MCF 10A (cell line): ENCODE measurements at regions of chr3 and their contacts with region 1.

Region 1: DNA sequence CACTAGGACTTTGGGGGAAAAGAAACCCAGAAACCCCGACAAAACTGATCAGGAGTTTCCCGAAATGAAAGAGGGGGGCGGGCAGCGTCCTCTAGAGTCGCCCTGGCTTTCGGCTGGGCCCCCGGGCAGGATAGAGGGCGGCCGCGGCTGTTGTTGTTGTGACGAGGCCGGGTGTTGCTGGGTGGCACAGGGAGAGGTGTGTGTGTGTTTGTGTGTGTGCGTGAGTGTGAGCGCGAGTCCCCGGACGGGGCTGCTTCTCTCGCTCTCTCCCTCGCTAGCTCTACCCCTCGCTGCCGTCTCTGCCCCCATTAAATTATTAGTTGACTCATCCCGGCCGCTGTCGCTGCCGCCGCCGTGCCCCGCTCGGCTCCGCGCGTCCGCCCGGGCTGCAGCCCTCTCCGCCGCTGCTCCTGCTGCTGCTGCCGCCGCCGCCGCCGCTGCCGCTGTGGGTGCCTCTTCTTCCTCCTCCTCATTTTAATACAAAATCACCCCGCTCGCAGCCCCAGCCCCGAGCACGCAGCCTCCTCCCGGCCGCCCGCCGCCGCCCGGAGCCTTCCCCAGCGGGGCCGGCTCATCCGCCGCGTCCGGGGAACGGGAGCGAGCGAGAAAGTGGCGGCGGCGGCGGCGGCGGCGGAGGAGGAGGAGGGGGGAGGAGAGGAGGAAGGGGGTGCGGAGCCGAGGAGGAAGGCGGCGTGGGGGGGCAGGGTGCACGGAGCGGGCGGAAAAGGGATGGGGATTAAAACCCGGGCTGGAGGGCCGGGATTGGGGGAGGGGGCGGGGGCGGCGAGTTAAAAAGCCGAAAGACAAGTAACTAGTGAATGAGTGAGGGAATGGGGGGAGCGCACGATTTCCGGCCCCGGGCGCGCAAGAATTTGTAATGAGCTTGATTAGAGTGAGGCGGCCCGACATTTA is at the start of gene SATB1:
- DNase-seq: peak; percentile 39
- H3K4me3 Mint-ChIP-seq: peak within 1 kb of the TSS; percentile 78
- H3K27ac Mint-ChIP-seq: no peak within 1 kb of the TSS
- H3K4me1 Mint-ChIP-seq: peaks cover 9% of the 10 kb centered on the region
- H3K27me3 Mint-ChIP-seq: peaks cover 99% of the 10 kb centered on the region
- CTCF ChIP-seq: no peak
- total RNA-seq, gene SATB1: 0.23 and 0.44 TPM in 2 replicates

Region 2: DNA sequence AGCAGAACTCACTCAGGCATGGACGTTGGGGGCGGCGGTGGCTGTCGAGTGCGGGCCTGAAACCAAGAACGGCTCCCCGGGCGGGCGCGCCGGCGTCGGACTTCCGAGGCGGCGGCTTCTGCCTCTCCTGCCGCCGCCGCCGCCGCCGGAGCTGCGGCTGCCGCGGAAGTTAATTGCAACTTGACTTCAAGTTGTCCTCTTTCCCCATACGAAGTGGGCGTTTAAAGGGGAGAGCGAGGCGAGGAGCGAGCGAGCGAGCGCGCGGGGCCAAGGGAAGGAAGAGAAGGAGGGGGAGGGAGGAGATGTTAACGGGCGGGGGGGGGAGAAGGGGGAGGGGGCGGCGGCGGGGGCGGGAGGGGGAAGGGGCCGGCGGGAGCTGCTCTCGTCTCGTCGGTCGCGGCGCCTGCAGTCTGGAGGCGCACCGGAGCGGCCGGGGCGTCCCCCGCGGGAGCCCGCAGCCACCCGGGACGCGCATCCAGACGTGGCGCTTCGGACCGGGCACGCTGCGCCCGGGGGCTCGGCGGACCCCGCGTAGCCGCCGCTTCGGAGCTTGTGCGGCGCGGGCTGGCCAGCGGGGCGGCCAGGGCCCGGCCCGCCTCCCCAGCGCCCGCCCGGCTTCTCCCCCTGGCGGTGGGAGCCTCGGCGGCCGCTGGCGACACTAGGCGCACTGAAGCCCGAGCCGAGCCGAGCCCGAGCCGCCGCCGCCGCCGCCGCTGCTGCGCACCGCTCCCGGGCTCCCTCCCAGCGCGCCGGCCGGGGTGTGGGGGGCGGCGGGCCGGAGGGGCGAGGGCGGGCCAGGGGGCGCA is 19.8 kb after region 1 on chr3:
- CTCF ChIA-PET with region 1: interaction called, 3 read pairs
- POLR2A ChIA-PET with region 1: no interaction called
- intact Hi-C with region 1: loop called (anchors 2 kb)
- DNase-seq: peak; percentile 36
- H3K4me3 Mint-ChIP-seq: peak overlapping the region; percentile 71
- H3K27ac Mint-ChIP-seq: no peak overlapping the region
- H3K4me1 Mint-ChIP-seq: no peaks in the 10 kb centered on the region
- H3K27me3 Mint-ChIP-seq: peaks cover 94% of the 10 kb centered on the region
- CTCF ChIP-seq: no peak

Region 3: DNA sequence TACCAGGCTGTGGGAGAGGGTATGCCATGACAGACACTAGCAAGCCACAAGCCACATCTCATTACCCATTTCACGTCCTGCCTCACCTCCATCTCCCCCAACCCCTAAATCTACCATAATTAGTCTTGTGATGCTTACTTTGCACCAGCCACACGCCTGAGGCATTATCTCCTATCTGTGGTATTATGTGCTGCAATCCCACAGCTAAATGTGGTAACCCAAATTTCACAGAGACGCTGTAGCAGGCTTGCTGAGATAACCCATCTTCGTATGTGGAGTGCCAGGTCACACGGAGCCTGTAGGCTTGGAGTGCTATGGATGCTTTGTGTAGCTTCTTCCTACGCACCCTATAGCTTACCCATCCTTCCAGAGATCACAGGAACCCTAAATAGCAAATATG is 466.7 kb after region 1 on chr3:
- CTCF ChIA-PET with region 1: no interaction called
- POLR2A ChIA-PET with region 1: no interaction called
- intact Hi-C with region 1: no loop called
- DNase-seq: no peak
- H3K4me3 Mint-ChIP-seq: no peak overlapping the region
- H3K27ac Mint-ChIP-seq: no peak overlapping the region
- H3K4me1 Mint-ChIP-seq: peaks cover 9% of the 10 kb centered on the region
- H3K27me3 Mint-ChIP-seq: no peaks in the 10 kb centered on the region
- CTCF ChIP-seq: no peak